Left ventricle myocardium inferior (tissue), 1 donor: ENCODE measurements at regions of chr19 and their contacts with region 1.

Region 1: DNA sequence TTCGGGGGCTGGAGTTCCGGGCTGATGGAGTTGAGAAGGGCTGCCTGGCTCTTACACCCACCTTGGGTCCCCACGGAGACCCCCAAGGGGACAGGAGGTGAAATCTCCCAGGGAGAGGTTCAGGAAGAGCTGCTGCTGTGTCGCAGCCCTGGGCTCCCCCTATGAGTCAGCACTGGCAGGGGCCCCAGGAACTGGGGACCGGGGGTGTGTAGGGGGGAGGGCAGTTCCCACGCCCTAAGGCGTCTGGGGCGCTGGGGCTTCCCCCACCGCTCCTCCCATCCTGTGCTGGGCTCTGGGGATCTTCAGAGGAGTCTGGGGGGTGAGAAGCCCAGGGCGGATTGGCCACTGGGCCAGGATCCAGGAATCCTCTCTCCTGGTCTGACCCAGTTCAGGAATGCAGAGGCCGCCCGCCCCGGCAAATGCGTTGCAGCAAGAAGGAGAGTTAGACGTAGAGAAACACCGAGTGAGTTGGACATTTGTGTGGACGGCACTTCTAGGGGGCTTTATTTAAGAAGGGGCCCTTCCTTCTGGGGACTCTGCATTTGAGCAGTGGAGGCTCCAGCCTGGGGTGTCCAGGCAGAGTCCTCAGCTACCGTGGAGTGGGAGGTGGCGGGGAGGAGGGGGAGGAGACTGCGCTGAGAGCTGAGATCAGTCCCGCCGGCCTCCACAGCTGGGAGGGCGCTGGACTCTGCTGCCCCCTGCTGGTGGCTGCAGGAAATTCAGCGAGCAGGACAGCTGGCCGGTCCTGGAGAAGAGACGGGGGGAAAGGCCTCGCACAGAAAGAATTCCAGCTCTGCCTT is 15.0 kb upstream of the NANOS3 start:
- DNase-seq: peak; percentile 94
- H3K4me3 ChIP-seq: peak overlapping the region; percentile 63
- H3K27ac ChIP-seq: peak overlapping the region; percentile 97
- H3K4me1 ChIP-seq: peaks cover 43% of the 10 kb centered on the region
- H3K27me3 ChIP-seq: no peaks in the 10 kb centered on the region
- CTCF ChIP-seq: peak; percentile 100

Region 2: DNA sequence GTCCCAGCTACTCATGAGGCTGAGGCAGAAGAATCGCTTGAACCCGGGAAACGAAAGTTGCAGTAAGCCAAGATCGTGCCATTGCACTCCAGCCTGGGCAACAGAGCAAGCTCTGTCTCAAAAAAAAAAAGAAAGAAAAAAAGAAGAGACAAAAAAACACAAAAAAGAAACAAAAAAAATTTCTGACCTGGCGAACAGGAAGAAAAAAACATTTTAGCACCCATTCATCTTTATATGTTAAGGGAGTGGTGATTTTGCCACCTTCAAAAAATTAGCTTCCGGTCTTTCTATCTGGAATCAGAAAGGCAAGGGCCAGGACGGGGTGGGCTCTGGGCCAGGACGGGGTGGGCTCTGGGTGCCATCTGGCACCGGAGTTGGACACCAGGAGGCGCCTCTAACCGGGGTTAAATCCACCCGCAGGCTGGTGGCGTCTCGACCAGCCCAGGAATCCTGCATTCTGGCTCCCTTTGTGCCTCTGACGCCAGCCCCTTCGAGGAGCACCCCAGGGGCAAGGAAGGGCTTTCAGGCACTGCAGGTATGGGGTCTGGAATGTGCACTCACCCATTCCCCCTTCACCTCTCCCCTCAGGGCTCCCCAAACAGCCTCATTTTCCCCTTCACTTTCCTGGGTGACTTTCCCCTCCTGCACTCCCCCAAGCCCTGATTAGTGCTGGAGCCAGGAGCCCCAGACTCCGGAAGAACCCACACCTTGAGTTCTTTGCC is 77.0 kb before region 1 on chr19:
- intact Hi-C with region 1: loop called (anchors 10 kb)
- DNase-seq: peak; percentile 71
- H3K4me3 ChIP-seq: no peak overlapping the region
- H3K27ac ChIP-seq: peak overlapping the region; percentile 19
- H3K4me1 ChIP-seq: peaks cover 32% of the 10 kb centered on the region
- H3K27me3 ChIP-seq: no peaks in the 10 kb centered on the region
- CTCF ChIP-seq: peak; percentile 74

Region 3: DNA sequence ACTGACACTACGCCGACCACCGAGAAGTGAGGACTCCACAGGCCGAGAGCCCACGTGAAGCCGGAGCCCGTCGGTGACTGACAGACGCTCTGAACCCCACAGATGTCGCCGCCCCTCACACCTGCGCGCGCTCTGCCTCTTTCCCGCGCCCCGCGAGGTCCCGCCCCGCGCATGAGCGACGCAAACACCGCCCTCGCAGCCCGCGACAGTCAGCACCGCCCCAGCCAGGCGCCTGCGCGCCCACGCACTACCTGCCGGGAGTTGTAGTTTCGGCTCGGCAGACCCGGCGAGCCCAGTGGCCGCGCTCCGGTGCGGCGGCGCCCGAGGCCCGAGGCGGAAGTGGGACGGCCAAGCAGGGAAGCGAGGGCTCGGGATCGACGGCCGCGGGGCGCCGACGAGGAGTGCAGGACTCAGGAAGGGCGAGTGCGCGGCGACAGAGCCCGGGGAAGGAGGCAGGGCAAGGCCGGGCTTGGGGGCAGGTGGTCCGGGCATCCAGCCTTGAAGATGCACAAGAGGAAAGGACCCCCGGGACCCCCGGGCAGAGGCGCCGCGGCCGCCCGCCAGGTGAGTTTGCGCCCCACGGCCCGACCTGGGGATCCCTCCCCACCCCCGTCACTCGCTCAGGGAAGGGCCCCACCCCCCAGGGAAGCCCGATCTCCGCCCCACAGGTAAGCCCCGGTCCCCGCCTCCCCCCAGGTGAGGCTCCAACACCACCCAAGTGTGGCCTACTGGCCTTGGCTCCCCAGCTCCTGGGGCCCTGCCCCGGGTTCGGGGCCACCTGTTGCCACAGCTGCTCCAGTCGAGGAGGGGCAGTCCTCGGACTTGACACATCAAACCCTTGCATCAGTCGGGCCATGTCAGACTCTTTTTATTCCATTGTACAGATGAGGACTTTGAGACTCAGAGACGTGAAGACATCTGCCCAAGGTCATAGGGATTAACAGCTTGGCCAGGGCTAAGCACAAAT is 44.3 kb after region 1 on chr19 and contains the starts of genes BRME1 and CC2D1A:
- intact Hi-C with region 1: no loop called
- DNase-seq: peak; percentile 94
- H3K4me3 ChIP-seq: peak within 1 kb of the TSS; percentile 96
- H3K27ac ChIP-seq: peak within 1 kb of the TSS; percentile 74
- H3K4me1 ChIP-seq: peaks cover 27% of the 10 kb centered on the region
- H3K27me3 ChIP-seq: no peaks in the 10 kb centered on the region
- CTCF ChIP-seq: no peak
- total RNA-seq, gene BRME1: 0.82 TPM
- total RNA-seq, gene CC2D1A: 20.1 TPM